ENCODE measurements at regions of chr4 and their contacts with region 1.

Region 1: DNA sequence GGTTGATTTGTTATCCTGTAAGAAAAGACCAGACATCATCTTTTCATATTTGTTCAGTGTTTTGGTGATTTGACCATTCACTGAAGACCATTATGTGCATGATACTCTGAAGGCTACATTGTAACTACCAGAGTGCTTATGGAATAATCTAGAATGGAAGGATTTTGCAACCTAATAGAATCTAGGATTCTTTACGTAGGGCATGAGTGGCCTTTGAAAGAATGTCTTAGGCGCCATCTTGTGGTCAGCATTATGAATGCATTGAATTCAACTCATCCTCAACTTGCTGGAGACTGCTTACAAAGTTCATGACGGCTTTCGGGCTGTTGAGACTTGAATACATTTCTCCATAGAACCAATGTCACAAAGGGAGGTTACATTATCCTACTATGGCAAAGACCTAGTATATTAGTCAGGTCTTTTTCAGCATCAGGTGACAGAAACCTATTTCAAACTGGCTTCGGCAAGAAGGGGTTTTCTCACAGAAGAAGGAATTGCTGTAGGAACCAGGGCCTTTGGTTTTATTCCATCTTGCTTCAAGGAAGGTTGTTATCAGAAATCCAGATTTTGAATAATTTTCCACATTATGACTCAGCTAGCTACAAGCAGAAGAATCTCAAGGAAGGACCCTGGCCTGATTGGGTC is 104.1 kb downstream of the GPAT3 start:
- DNase-seq: no peak
- H3K4me3 ChIP-seq: no peak overlapping the region
- H3K27ac ChIP-seq: no peak overlapping the region
- H3K4me1 ChIP-seq: peaks cover 0 to 4% (median 0%) of the 10 kb centered on the region in 6 donors
- H3K27me3 ChIP-seq: peaks cover 0 to 9% (median 0%) of the 10 kb centered on the region in 7 donors
- CTCF ChIP-seq: peak; percentile 60 to 90 (median 80)
- POLR2A ChIP-seq: no peak

Region 2: GRCh38 chr4:83490876-83491450 is 149.0 kb before region 1 on chr4:
- intact Hi-C with region 1: loop called (anchors 5 kb)
- DNase-seq: no peak
- H3K4me3 ChIP-seq: no peak overlapping the region
- H3K27ac ChIP-seq: no peak overlapping the region
- H3K4me1 ChIP-seq: peaks cover 0 to 3% (median 0%) of the 10 kb centered on the region in 6 donors
- H3K27me3 ChIP-seq: no peaks in the 10 kb centered on the region
- CTCF ChIP-seq: peak in 10 of 11 experiments; percentile 23 to 76 (median 62)
- POLR2A ChIP-seq: no peak

Region 3: GRCh38 chr4:83510442-83510841 is 129.5 kb before region 1 on chr4:
- intact Hi-C with region 1: loop called (anchors 5 kb)
- DNase-seq: no peak
- H3K4me3 ChIP-seq: no peak overlapping the region
- H3K27ac ChIP-seq: no peak overlapping the region
- H3K4me1 ChIP-seq: no peaks in the 10 kb centered on the region
- H3K27me3 ChIP-seq: no peaks in the 10 kb centered on the region
- CTCF ChIP-seq: no peak
- POLR2A ChIP-seq: no peak

Region 4: GRCh38 chr4:83780053-83780728 is 140.2 kb after region 1 on chr4:
- intact Hi-C with region 1: no loop called
- DNase-seq: no peak
- H3K4me3 ChIP-seq: no peak overlapping the region
- H3K27ac ChIP-seq: no peak overlapping the region
- H3K4me1 ChIP-seq: no peaks in the 10 kb centered on the region
- H3K27me3 ChIP-seq: peaks cover 0 to 9% (median 0%) of the 10 kb centered on the region in 7 donors
- CTCF ChIP-seq: no peak
- POLR2A ChIP-seq: no peak

Region 5: GRCh38 chr4:84503495-84504437 is 863.8 kb after region 1 on chr4:
- intact Hi-C with region 1: loop called (anchors 10 kb)
- DNase-seq: no peak
- H3K4me3 ChIP-seq: no peak overlapping the region
- H3K27ac ChIP-seq: no peak overlapping the region
- H3K4me1 ChIP-seq: peaks cover 1 to 19% (median 12%) of the 10 kb centered on the region in 6 donors
- H3K27me3 ChIP-seq: peaks cover 5 to 100% (median 91%) of the 10 kb centered on the region in 7 donors
- CTCF ChIP-seq: peak in 8 of 11 experiments; percentile 28 to 56 (median 42)
- POLR2A ChIP-seq: no peak

Measured in spleen (tissue), 13 donors.